ENCODE measurements at regions of chr9 and their contacts with region 1.

Region 1: GRCh38 chr9:136711751-136712689 is at the start of gene DIPK1B:
- DNase-seq: peak in 4 of 6 donors; percentile 42 to 84 (median 64)
- ATAC-seq: peak; percentile 26 to 54 (median 46)
- H3K4me3 ChIP-seq: peak within 1 kb of the TSS; percentile 37 to 57 (median 48)
- H3K27ac ChIP-seq: no peak within 1 kb of the TSS
- H3K4me1 ChIP-seq: peaks cover 0 to 6% (median 3%) of the 10 kb centered on the region in 3 donors
- H3K27me3 ChIP-seq: no peaks in the 10 kb centered on the region
- CTCF ChIP-seq: no peak
- total RNA-seq, gene DIPK1B: 4.3 to 7.5 (median 5.8) TPM

Region 2: DNA sequence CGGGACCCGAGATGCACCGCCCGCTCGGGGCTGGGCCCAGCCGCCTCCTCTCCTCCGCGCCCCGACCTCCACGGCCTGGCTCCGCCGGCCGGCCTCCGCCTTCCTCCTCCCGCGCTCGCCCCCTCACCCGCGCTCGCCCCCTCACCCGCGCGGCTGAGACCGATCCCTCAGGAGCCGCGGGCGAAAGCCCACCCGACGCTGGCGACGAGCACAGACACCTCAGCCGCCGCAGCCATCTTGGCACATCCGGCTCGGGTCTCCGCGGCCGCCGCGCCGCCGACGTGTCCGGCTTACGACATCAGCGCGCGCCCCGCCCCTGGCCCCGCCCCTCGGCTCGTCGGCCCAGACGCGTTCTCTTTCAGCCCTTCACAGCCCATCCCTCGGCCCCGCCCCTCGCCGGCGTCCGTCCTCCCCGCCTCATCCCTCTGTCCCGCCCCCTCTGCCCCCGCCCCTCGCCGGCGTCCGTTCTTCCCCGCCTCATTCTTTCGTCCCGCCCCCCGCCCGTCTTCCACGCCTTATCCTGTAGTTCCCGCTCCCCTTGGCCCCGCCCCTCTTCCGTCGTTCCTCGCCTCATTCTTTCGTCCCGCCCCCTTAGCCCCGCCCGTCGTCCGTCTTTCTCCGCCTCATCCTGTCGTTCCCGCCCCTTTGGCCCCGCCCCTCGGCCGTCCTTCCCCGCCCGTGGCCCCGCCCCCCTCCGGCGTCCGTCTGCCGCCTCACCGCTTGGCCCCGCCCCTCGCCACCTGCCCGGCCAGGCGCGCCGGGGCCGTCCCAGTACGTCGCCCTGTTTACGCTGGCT is 229.0 kb before region 1 on chr9 and contains the start of gene SEC16A:
- intact Hi-C with region 1: loop called in 1 of 3 experiments (anchors 10 kb)
- DNase-seq: peak; percentile 99 to 100 (median 100)
- ATAC-seq: peak; percentile 69 to 84 (median 76)
- H3K4me3 ChIP-seq: peak within 1 kb of the TSS; percentile 70 to 99 (median 94)
- H3K27ac ChIP-seq: peak within 1 kb of the TSS; percentile 99 to 100 (median 99)
- H3K4me1 ChIP-seq: peaks cover 15 to 28% (median 22%) of the 10 kb centered on the region in 3 donors
- H3K27me3 ChIP-seq: no peaks in the 10 kb centered on the region
- CTCF ChIP-seq: no peak
- total RNA-seq, gene SEC16A: 32.1 to 46.6 (median 39.5) TPM

Region 3: DNA sequence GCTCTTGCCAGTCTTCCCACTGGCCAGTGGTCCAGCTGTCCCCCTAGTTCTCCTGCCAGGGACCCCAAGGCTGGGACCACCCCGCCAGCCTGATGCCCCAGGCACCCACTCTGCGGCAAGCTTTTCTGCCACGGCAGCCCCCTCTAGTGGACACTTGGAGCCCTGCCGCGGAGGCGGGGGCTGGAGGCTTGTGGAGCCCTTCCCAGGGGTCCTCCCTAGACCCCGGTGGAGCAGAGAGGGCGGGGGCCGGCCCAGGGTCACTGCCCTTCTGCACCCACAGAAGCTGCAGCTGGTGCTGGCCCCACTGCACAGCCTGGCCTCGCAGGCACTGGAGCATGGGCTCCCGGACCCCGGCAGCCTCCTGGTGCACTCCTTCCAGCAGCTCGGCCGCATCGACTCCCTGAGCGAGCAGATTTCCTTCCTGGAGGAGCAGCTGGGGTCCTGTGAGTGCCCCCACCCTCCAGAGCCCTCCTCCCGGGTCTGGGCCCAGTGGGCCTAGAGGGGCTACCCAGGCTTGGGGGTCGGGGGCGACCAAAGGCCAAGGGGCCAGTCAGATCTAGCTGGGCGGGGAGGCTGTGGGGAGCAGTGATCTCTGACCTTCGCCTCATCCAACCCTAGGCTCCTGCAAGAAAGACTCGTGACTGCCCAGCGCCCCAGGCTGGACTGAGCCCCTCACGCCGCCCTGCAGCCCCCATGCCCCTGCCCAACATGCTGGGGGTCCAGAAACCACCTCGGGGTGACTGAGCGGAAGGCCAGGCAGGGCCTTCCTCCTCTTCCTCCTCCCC is 40.2 kb before region 1 on chr9:
- intact Hi-C with region 1: no loop called
- DNase-seq: peak in 3 of 6 donors; percentile 60 to 85 (median 76)
- ATAC-seq: peak; percentile 28 to 48 (median 31)
- H3K4me3 ChIP-seq: no peak overlapping the region
- H3K27ac ChIP-seq: no peak overlapping the region
- H3K4me1 ChIP-seq: peaks cover 9 to 20% (median 9%) of the 10 kb centered on the region in 3 donors
- H3K27me3 ChIP-seq: no peaks in the 10 kb centered on the region
- CTCF ChIP-seq: peak; percentile 83 to 85 (median 84)

Measured in pancreas (tissue), 10 donors.